ENCODE measurements at regions of chr10 and their contacts with region 1.

Region 1: GRCh38 chr10:97210543-97210961 is 24.8 kb upstream of the SLIT1 start:
- DNase-seq: peak; percentile 64
- H3K4me3 Mint-ChIP-seq: no peak overlapping the region
- H3K27ac Mint-ChIP-seq: no peak overlapping the region
- H3K4me1 Mint-ChIP-seq: no peaks in the 10 kb centered on the region
- H3K27me3 Mint-ChIP-seq: peaks cover 44% of the 10 kb centered on the region
- CTCF ChIP-seq: peak; percentile 77

Region 2: DNA sequence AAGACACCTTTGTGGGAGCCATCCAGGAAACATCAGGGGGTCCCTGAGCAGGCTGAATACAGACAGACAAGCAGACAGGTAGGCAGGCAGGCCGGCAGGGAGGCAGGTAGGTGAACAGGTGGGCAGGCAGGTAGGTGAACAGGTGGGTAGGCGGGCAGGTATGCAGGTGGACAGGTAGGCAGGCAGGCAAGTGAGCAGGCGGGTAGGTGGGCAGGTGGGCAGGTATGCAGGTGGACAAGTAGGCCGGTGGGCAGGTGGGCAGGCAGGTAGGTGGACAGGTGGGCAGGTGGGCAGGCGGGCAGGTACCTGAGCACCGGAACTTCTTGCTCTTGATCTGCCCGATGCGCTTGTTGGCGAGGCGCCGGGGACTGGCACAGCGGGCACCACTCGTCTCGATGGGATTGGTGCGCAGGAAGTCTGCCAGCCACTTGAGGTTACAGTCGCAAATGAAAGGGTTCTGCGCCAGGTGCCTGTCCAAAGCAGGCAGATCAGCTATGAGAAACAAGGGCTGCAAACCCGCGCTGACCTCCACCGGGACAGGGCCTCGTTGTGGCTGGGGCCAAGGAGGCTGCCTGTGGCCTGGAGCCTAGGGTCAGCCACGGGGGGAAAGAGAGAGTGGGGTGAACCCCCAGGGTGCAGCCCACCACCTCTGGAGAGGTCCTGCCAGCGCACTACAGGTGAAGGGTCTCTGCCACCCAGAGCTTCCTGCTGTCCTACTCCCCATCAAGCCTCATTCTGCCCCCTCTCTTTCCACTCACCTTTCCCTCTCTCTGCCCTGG is 161.7 kb before region 1 on chr10:
- CTCF ChIA-PET with region 1: no interaction called
- intact Hi-C with region 1: no loop called
- DNase-seq: no peak
- H3K4me3 Mint-ChIP-seq: no peak overlapping the region
- H3K27ac Mint-ChIP-seq: no peak overlapping the region
- H3K4me1 Mint-ChIP-seq: peaks cover 9% of the 10 kb centered on the region
- H3K27me3 Mint-ChIP-seq: peaks cover 56% of the 10 kb centered on the region
- CTCF ChIP-seq: no peak

Region 3: GRCh38 chr10:97072851-97073665 is 137.5 kb before region 1 on chr10:
- CTCF ChIA-PET with region 1: interaction called, 16 read pairs
- intact Hi-C with region 1: loop called (anchors 2 kb)
- DNase-seq: peak; percentile 79
- H3K4me3 Mint-ChIP-seq: no peak overlapping the region
- H3K27ac Mint-ChIP-seq: no peak overlapping the region
- H3K4me1 Mint-ChIP-seq: peaks cover 7% of the 10 kb centered on the region
- H3K27me3 Mint-ChIP-seq: peaks cover 83% of the 10 kb centered on the region
- CTCF ChIP-seq: peak; percentile 55

Region 4: GRCh38 chr10:97081621-97082235 is 128.8 kb before region 1 on chr10:
- CTCF ChIA-PET with region 1: interaction called, 7 read pairs
- intact Hi-C with region 1: loop called (anchors 2 kb)
- DNase-seq: peak; percentile 59
- H3K4me3 Mint-ChIP-seq: no peak overlapping the region
- H3K27ac Mint-ChIP-seq: no peak overlapping the region
- H3K4me1 Mint-ChIP-seq: no peaks in the 10 kb centered on the region
- H3K27me3 Mint-ChIP-seq: peaks cover 83% of the 10 kb centered on the region
- CTCF ChIP-seq: peak; percentile 44

Region 5: GRCh38 chr10:97128516-97129154 is 81.9 kb before region 1 on chr10:
- CTCF ChIA-PET with region 1: no interaction called
- intact Hi-C with region 1: loop called (anchors 10 kb)
- DNase-seq: no peak
- H3K4me3 Mint-ChIP-seq: no peak overlapping the region
- H3K27ac Mint-ChIP-seq: no peak overlapping the region
- H3K4me1 Mint-ChIP-seq: no peaks in the 10 kb centered on the region
- H3K27me3 Mint-ChIP-seq: peaks cover 94% of the 10 kb centered on the region
- CTCF ChIP-seq: no peak